AG04449 (cell line): ENCODE measurements at regions of chr14 and their contacts with region 1.

Region 1: GRCh38 chr14:88168498-88169165 is 154.4 kb downstream of the KCNK10 start:
- DNase-seq: no peak
- H3K4me3 ChIP-seq: no peak overlapping the region
- CTCF ChIP-seq: peak; percentile 63

Region 2: GRCh38 chr14:87457727-87458126 is 710.9 kb before region 1 on chr14:
- CTCF ChIA-PET with region 1: no interaction called
- POLR2A ChIA-PET with region 1: no interaction called
- DNase-seq: no peak
- H3K4me3 ChIP-seq: no peak overlapping the region
- CTCF ChIP-seq: no peak

Region 3: GRCh38 chr14:88013750-88014349 is 154.8 kb before region 1 on chr14:
- CTCF ChIA-PET with region 1: interaction called, 10 read pairs
- POLR2A ChIA-PET with region 1: no interaction called
- DNase-seq: peak; percentile 12
- H3K4me3 ChIP-seq: no peak overlapping the region
- CTCF ChIP-seq: peak; percentile 75